ENCODE measurements at regions of chr19 and their contacts with region 1.

Region 1: DNA sequence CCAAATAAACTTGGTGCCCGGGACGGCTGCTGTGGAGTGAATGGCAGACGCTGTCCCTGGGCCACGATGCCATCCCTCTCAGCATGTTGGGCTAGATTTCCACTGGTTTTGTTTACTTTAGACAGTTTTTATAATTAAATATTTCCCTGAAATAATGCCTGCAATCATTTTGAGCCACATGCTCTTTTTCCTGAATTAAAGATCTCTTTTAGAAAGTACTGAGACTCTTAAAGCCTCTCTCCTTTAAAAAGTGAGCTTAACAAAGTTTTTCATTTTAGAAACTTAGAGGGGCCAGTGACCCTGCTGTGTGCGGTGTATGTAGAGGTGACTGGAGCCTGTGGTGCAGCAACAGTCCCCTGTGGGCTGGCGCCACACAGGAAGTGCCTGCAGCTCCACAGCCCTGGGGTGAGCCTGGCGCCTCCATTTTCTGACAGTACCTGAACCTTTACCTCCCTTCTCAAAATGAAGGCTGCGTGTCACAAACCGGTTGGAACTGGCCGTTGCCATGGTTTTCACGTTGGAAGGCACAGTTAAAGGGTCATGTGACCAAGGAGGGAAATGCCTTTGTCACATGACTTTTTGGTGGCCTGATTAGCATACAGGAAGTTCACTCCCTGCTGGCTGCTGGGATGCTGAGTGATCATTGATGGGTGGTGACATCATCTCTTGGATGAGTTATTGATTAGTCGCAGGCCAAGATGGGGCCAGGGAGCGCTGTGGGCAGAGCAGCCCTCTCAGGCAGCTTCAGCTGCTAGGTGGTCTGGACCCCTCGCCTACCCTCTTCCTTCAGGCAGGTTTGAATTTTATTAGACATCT is 26.3 kb downstream of the TSSK6 start:
- DNase-seq: peak; percentile 90
- ATAC-seq: peak; percentile 63
- H3K4me3 ChIP-seq: peak overlapping the region in 1 of 5 experiments; percentile 32
- H3K4me3 Mint-ChIP-seq: peak overlapping the region; percentile 73
- H3K27ac ChIP-seq: peak overlapping the region; percentile 79 to 81
- H3K27ac Mint-ChIP-seq: peak overlapping the region; percentile 98
- H3K4me1 ChIP-seq: peaks cover 37 to 53% of the 10 kb centered on the region in 2 donors
- H3K4me1 Mint-ChIP-seq: peaks cover 56% of the 10 kb centered on the region
- H3K27me3 ChIP-seq: no peaks in the 10 kb centered on the region
- H3K27me3 Mint-ChIP-seq: no peaks in the 10 kb centered on the region
- CTCF ChIP-seq: no peak

Region 2: GRCh38 chr19:19170053-19170872 is 318.8 kb before region 1 on chr19 and contains the start of gene MEF2B:
- CTCF ChIA-PET with region 1: interaction called, 12 read pairs
- POLR2A ChIA-PET with region 1: interaction called, 3 read pairs
- intact Hi-C with region 1: no loop called
- DNase-seq: peak; percentile 88
- ATAC-seq: peak; percentile 95
- H3K4me3 ChIP-seq: peak within 1 kb of the TSS; percentile 7 to 46 (median 26)
- H3K4me3 Mint-ChIP-seq: peak within 1 kb of the TSS; percentile 82
- H3K27ac ChIP-seq: no peak within 1 kb of the TSS
- H3K27ac Mint-ChIP-seq: peak within 1 kb of the TSS; percentile 56
- H3K4me1 ChIP-seq: peaks cover 13 to 29% of the 10 kb centered on the region in 2 donors
- H3K4me1 Mint-ChIP-seq: peaks cover 34% of the 10 kb centered on the region
- H3K27me3 ChIP-seq: peaks cover 0 to 18% (median 2%) of the 10 kb centered on the region in 4 experiments
- H3K27me3 Mint-ChIP-seq: peaks cover 8% of the 10 kb centered on the region
- CTCF ChIP-seq: no peak
- total RNA-seq, gene MEF2B: 4.1 and 5.5 TPM in 2 replicates

Region 3: GRCh38 chr19:19203012-19203856 is 285.8 kb before region 1 on chr19 and contains the start of gene NR2C2AP:
- CTCF ChIA-PET with region 1: no interaction called
- POLR2A ChIA-PET with region 1: no interaction called
- intact Hi-C with region 1: no loop called
- DNase-seq: peak; percentile 93
- ATAC-seq: peak; percentile 94
- H3K4me3 ChIP-seq: peak within 1 kb of the TSS; percentile 71 to 91 (median 81)
- H3K4me3 Mint-ChIP-seq: peak within 1 kb of the TSS; percentile 92
- H3K27ac ChIP-seq: peak within 1 kb of the TSS; percentile 57 to 85
- H3K27ac Mint-ChIP-seq: peak within 1 kb of the TSS; percentile 91
- H3K4me1 ChIP-seq: peaks cover 23 to 33% of the 10 kb centered on the region in 2 donors
- H3K4me1 Mint-ChIP-seq: peaks cover 30% of the 10 kb centered on the region
- H3K27me3 ChIP-seq: peaks cover 0 to 11% (median 2%) of the 10 kb centered on the region in 4 experiments
- H3K27me3 Mint-ChIP-seq: peaks cover 9% of the 10 kb centered on the region
- CTCF ChIP-seq: no peak
- total RNA-seq, gene NR2C2AP: 27.1 and 29.3 TPM in 2 replicates

Region 4: GRCh38 chr19:19361075-19361594 is 127.9 kb before region 1 on chr19:
- CTCF ChIA-PET with region 1: interaction called, 301 read pairs
- POLR2A ChIA-PET with region 1: interaction called, 13 read pairs
- intact Hi-C with region 1: no loop called
- DNase-seq: peak; percentile 83
- ATAC-seq: peak; percentile 68
- H3K4me3 ChIP-seq: peak overlapping the region in 4 of 5 experiments; percentile 28 to 59 (median 42)
- H3K4me3 Mint-ChIP-seq: peak overlapping the region; percentile 79
- H3K27ac ChIP-seq: peak overlapping the region; percentile 22 to 40
- H3K27ac Mint-ChIP-seq: peak overlapping the region; percentile 88
- H3K4me1 ChIP-seq: peaks cover 18 to 26% of the 10 kb centered on the region in 2 donors
- H3K4me1 Mint-ChIP-seq: peaks cover 22% of the 10 kb centered on the region
- H3K27me3 ChIP-seq: no peaks in the 10 kb centered on the region
- H3K27me3 Mint-ChIP-seq: no peaks in the 10 kb centered on the region
- CTCF ChIP-seq: peak; percentile 84

Region 5: DNA sequence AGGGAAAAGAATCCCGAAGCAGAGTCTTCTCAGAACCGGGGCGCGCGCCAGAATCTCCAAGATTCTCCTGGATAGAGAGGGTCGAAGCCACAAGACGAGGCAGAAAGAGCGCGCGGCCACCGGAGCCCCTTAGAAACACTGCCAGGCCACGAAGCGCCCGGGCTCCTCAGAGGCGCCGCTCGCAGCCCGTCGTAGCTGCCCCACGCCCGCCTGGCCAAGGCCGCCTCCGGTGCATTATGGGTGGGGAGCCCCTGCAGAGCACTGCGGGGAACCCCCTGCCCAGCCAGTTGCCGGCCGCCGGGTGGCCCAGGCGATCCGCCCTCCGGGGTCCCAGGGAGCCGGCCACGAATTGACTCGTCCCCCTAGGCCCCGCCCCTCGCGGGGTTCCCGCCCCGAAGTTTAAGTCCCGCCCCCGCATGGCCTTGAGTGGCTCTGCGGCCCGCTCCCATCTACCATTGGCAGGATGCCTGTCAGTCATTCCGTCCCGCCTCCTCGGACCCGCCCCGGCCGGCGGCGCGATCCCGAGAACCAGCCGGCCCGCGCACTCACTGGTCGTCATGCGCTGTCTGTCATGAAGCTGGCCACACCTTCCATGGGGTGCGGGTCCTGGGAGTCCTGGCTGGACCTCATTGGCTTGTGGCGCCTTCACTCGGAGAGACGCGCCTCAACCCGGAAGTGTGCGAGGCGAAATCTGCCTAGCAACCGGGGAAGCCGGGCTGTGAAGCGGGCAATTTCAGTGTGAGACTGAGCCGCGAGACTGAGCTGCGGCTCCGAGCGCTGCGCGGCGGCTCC is 103.8 kb before region 1 on chr19:
- CTCF ChIA-PET with region 1: interaction called, 20 read pairs
- POLR2A ChIA-PET with region 1: interaction called, 10 read pairs
- intact Hi-C with region 1: loop called (anchors 1 kb)
- DNase-seq: peak; percentile 99
- ATAC-seq: peak; percentile 89
- H3K4me3 ChIP-seq: peak overlapping the region; percentile 21 to 88 (median 80)
- H3K4me3 Mint-ChIP-seq: peak overlapping the region; percentile 92
- H3K27ac ChIP-seq: peak overlapping the region; percentile 57 to 81
- H3K27ac Mint-ChIP-seq: peak overlapping the region; percentile 92
- H3K4me1 ChIP-seq: peaks cover 15 to 24% of the 10 kb centered on the region in 2 donors
- H3K4me1 Mint-ChIP-seq: peaks cover 46% of the 10 kb centered on the region
- H3K27me3 ChIP-seq: no peaks in the 10 kb centered on the region
- H3K27me3 Mint-ChIP-seq: no peaks in the 10 kb centered on the region
- CTCF ChIP-seq: no peak

Region 6: GRCh38 chr19:19444681-19445155 is 44.4 kb before region 1 on chr19:
- CTCF ChIA-PET with region 1: interaction called, 3 read pairs
- POLR2A ChIA-PET with region 1: interaction called, 3 read pairs
- intact Hi-C with region 1: loop called (anchors 5 kb)
- DNase-seq: peak; percentile 69
- ATAC-seq: peak; percentile 70
- H3K4me3 ChIP-seq: peak overlapping the region in 1 of 5 experiments; percentile 21
- H3K4me3 Mint-ChIP-seq: peak overlapping the region; percentile 81
- H3K27ac ChIP-seq: peak overlapping the region; percentile 69 to 73
- H3K27ac Mint-ChIP-seq: peak overlapping the region; percentile 92
- H3K4me1 ChIP-seq: peaks cover 35 to 47% of the 10 kb centered on the region in 2 donors
- H3K4me1 Mint-ChIP-seq: peaks cover 61% of the 10 kb centered on the region
- H3K27me3 ChIP-seq: no peaks in the 10 kb centered on the region
- H3K27me3 Mint-ChIP-seq: no peaks in the 10 kb centered on the region
- CTCF ChIP-seq: no peak

Region 7: DNA sequence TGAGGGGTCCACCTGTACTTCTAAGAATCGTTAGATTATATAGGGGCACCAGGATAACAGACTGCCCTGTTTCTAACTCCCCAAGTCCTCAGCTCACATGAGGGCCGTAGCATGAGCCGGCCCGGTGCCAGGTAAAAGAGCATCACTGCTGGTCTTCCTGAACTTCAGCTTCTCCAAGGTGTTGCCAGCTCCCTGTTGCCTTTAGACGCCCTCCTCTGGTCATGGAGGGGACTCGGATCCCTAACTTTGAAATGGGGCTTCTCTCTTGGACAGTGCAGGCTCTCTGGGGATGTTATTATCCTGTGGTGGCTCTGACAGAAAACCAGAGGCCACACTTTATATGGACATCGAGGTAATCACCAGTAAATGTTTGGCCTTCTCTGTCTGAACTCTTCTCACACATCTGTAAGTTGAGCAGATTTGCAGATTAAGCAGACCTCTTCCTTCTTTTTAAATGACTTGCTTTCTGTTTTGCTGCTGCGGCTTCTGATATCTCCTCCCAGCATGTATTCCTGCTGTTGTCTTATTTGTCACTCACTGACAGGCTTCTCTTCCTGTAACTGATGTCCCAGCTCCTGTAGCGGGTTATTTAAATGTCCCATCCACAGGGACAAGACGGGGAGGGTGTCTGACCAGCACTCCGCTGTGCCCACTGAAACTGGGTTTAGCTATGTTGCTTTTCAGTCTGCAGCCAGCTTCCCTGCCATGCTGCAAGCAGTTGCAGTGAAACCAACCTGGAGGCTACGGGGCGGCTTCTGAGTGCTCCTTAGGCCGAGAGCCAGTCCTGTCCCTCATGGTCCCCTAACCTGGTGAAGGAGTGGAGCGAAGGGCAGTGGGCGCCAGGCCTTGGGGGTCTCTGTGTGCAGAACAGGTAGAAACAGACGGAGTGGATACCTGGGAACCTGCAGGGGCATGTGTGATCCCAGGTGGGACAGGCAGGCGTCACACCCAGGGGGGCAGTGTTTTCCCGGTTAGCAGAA is 12.9 kb before region 1 on chr19:
- CTCF ChIA-PET with region 1: interaction called, 13 read pairs
- POLR2A ChIA-PET with region 1: interaction called, 5 read pairs
- intact Hi-C with region 1: no loop called
- DNase-seq: no peak
- ATAC-seq: no peak
- H3K4me3 ChIP-seq: no peak overlapping the region
- H3K4me3 Mint-ChIP-seq: no peak overlapping the region
- H3K27ac ChIP-seq: peak overlapping the region in 1 of 2 donors; percentile 34
- H3K27ac Mint-ChIP-seq: no peak overlapping the region
- H3K4me1 ChIP-seq: peaks cover 17 to 39% of the 10 kb centered on the region in 2 donors
- H3K4me1 Mint-ChIP-seq: peaks cover 55% of the 10 kb centered on the region
- H3K27me3 ChIP-seq: no peaks in the 10 kb centered on the region
- H3K27me3 Mint-ChIP-seq: no peaks in the 10 kb centered on the region
- CTCF ChIP-seq: no peak

Region 8: DNA sequence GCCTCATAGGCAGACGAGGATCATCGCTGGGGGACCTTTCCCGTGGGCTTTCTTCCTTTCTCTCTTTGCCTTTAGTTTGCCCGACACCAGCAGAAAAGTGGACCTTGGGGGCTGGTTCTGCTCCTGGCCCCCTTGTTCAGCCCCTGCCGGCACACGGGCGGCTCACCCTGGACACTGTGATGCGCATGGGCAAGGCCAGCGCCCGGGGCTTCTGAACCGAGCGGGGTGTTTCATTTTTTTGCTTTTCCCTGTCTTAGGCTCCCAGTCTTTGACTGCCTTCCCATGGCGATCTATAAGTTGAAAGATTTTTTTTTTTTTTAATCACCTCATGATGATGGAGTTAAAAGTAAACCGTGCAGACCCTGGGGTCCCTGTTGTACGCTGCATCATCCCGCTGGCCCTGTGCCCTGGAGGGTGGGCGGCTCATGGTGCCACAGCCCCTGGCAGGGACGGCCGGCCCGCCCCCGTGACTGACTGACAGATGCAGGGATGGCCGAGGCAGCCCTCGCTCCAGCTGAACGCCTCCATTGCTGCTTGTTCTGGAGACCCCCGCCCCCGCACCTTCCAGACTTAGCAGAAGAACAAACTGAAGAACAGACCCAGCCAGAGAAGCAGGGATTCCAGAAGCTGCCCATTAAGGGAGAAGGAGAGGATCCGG is 16.7 kb after region 1 on chr19:
- CTCF ChIA-PET with region 1: no interaction called
- POLR2A ChIA-PET with region 1: no interaction called
- intact Hi-C with region 1: no loop called
- DNase-seq: no peak
- ATAC-seq: no peak
- H3K4me3 ChIP-seq: no peak overlapping the region
- H3K4me3 Mint-ChIP-seq: no peak overlapping the region
- H3K27ac ChIP-seq: no peak overlapping the region
- H3K27ac Mint-ChIP-seq: no peak overlapping the region
- H3K4me1 ChIP-seq: no peaks in the 10 kb centered on the region
- H3K4me1 Mint-ChIP-seq: no peaks in the 10 kb centered on the region
- H3K27me3 ChIP-seq: no peaks in the 10 kb centered on the region
- H3K27me3 Mint-ChIP-seq: no peaks in the 10 kb centered on the region
- CTCF ChIP-seq: no peak

Region 9: GRCh38 chr19:19686580-19686979 is 197.5 kb after region 1 on chr19:
- CTCF ChIA-PET with region 1: no interaction called
- POLR2A ChIA-PET with region 1: no interaction called
- intact Hi-C with region 1: no loop called
- DNase-seq: no peak
- ATAC-seq: no peak
- H3K4me3 ChIP-seq: no peak overlapping the region
- H3K4me3 Mint-ChIP-seq: no peak overlapping the region
- H3K27ac ChIP-seq: no peak overlapping the region
- H3K27ac Mint-ChIP-seq: peak overlapping the region; percentile 42
- H3K4me1 ChIP-seq: no peaks in the 10 kb centered on the region
- H3K4me1 Mint-ChIP-seq: no peaks in the 10 kb centered on the region
- H3K27me3 ChIP-seq: no peaks in the 10 kb centered on the region
- H3K27me3 Mint-ChIP-seq: no peaks in the 10 kb centered on the region
- CTCF ChIP-seq: no peak